ENCODE measurements at regions of chr5 and their contacts with region 1.

Region 1: DNA sequence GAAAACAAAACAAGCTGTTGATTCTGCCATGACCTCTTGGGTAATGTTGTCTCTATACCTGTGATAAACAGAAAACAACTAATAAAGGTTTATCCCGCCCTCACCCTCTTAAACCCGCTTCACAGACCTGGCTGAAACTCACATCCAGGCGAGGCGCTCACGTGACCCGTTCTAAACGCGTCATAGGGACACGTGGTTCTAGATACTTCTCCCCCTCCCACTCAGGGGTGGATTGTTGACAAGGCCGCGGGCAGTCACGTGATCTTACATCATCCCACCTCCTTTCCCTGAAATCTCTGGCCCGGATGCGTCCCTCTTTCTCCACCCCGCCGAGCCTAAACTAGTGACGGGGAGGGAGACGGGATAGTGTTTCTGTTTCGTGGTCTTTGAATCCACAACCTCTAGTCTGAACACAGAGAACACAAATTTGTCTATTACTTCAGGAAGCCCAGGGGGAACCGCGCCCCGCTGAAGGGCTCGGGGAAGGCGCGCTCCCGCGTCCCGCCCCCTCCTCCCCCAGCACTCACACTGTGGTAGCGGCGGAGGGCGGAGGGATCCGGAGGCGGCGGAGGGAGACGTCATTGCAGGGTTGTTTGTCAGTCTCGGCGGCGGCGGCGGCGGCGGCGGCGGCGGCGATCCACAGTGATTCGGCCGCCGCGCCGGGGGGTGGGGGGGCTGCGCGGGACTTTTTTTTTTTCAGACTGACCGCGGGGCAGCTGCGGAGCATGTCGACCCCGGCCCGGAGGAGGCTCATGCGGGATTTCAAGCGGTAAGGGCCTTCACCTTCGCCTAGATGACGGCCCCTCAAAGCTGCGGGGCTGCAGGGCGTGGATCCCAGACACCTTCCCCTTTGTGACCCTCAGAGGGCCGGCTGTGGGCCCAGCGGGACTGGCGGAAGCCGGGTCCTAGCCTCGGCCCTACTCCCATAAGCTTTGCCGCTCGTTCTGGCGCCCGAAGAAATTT is at the start of gene UBE2B:
- DNase-seq: peak; percentile 95
- ATAC-seq: peak; percentile 75
- H3K4me3 Mint-ChIP-seq: peak within 1 kb of the TSS; percentile 98
- H3K27ac Mint-ChIP-seq: peak within 1 kb of the TSS; percentile 100
- H3K4me1 Mint-ChIP-seq: peaks cover 54% of the 10 kb centered on the region
- H3K27me3 Mint-ChIP-seq: no peaks in the 10 kb centered on the region
- CTCF ChIP-seq: no peak
- total RNA-seq, gene UBE2B: 60.4 and 64.4 TPM in 2 replicates

Region 2: DNA sequence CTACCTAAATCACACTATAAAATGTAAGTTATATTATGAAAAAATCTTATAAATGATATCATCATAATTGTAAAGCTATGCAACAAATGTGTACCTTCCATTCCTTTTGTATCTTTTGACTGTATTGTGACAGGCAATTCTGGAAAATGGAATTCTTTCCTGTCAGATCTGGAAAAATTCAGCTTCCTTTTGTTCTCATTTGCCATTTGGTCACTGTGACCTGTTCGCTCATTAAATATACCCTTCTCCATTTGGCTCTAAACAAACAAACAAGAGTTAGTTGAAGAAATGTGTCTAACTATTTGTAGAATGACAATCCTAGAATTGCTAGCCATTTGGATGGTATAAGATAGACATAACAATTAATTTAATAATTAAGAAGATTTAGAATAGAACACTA is 66.8 kb before region 1 on chr5:
- CTCF ChIA-PET with region 1: interaction called, 5 read pairs
- POLR2A ChIA-PET with region 1: no interaction called
- intact Hi-C with region 1: loop called (anchors 5 kb)
- DNase-seq: no peak
- ATAC-seq: no peak
- H3K4me3 Mint-ChIP-seq: no peak overlapping the region
- H3K27ac Mint-ChIP-seq: no peak overlapping the region
- H3K4me1 Mint-ChIP-seq: no peaks in the 10 kb centered on the region
- H3K27me3 Mint-ChIP-seq: no peaks in the 10 kb centered on the region
- CTCF ChIP-seq: no peak

Region 3: GRCh38 chr5:134527146-134527960 is 156.2 kb after region 1 on chr5:
- CTCF ChIA-PET with region 1: no interaction called
- POLR2A ChIA-PET with region 1: interaction called, 86 read pairs
- intact Hi-C with region 1: loop called (anchors 1 kb)
- DNase-seq: peak; percentile 73
- ATAC-seq: peak; percentile 49
- H3K4me3 Mint-ChIP-seq: peak overlapping the region; percentile 98
- H3K27ac Mint-ChIP-seq: peak overlapping the region; percentile 85
- H3K4me1 Mint-ChIP-seq: peaks cover 58% of the 10 kb centered on the region
- H3K27me3 Mint-ChIP-seq: no peaks in the 10 kb centered on the region
- CTCF ChIP-seq: no peak

Region 4: DNA sequence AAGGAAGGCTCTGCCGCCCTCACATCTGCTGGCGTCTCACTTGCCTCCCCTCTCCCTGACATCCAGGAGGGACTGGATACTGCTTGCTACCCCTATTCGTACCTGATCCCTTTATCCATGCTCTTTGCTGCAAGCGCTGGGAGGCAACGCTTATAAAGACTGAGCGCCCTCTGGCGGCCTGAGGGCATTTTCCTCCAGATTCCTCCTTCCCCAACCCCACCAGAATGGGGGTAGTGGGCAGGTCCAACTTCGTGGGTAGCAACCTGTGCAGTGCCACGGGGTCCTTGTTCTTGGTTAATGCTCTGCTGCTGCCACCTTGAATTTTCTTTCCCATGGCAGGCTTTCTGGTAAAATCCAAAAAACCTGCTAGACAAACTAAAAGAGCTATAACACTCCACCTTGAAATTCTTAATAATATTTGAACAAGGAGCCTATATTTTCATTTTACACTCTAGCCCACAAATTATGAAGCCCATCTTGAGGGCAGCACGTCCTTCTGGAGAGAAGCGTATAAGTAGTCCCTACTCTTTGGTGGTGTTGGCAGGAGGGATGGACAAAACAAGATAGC is 206.7 kb after region 1 on chr5:
- CTCF ChIA-PET with region 1: interaction called, 3 read pairs
- POLR2A ChIA-PET with region 1: interaction called, 6 read pairs
- intact Hi-C with region 1: loop called (anchors 1 kb)
- DNase-seq: peak; percentile 72
- ATAC-seq: peak; percentile 72
- H3K4me3 Mint-ChIP-seq: no peak overlapping the region
- H3K27ac Mint-ChIP-seq: peak overlapping the region; percentile 27
- H3K4me1 Mint-ChIP-seq: peaks cover 17% of the 10 kb centered on the region
- H3K27me3 Mint-ChIP-seq: no peaks in the 10 kb centered on the region
- CTCF ChIP-seq: peak; percentile 55

Region 5: GRCh38 chr5:134648425-134649162 is 277.4 kb after region 1 on chr5 and contains the start of gene SEC24A:
- CTCF ChIA-PET with region 1: no interaction called
- POLR2A ChIA-PET with region 1: interaction called, 3 read pairs
- intact Hi-C with region 1: loop called (anchors 1 kb)
- DNase-seq: peak; percentile 86
- ATAC-seq: peak; percentile 77
- H3K4me3 Mint-ChIP-seq: peak within 1 kb of the TSS; percentile 91
- H3K27ac Mint-ChIP-seq: peak within 1 kb of the TSS; percentile 96
- H3K4me1 Mint-ChIP-seq: peaks cover 22% of the 10 kb centered on the region
- H3K27me3 Mint-ChIP-seq: no peaks in the 10 kb centered on the region
- CTCF ChIP-seq: no peak
- total RNA-seq, gene SEC24A: 13.8 and 15.6 TPM in 2 replicates

Region 6: DNA sequence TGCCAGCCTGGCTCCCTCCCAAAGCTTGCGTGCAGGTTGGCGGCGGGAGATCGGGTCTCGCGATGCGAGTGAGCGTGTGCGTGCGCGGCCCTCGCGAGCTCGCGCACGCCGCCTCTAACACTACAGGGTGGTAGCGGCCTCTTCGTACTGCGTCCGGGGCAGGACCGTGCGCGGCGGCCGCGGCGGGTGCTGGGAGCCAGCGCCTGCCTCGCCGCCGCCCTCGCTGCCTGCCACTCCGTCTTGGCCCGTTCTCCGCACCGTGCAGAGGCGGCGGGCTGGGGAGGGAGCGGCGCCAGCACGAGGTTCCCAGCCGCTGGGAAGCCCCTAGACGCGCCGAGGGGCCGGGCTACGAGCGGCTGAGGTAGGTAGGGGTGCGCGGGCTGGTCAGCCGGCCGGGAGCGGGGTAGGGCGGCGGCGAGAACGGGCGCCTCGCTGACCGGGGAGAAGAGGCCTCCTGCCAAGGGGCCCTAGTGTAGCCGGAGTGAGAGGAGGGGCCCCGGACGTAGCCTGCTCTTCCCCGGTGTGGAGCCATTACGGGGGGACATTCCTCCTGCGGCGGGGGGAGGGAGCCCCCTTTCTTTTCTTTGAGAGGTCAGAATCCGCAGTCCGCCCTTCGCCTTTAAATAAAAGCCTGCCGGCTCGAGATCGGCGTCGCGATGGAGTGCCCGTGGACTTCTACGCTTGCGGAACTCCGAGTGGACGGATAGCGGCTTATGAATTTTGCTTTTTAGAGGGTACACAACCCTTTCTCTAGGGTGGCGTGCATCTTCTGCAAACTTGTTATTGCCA is 474.9 kb after region 1 on chr5 and contains the start of gene C5orf24:
- CTCF ChIA-PET with region 1: no interaction called
- POLR2A ChIA-PET with region 1: interaction called, 8 read pairs
- intact Hi-C with region 1: loop called (anchors 2 kb)
- DNase-seq: peak; percentile 86
- ATAC-seq: peak; percentile 92
- H3K4me3 Mint-ChIP-seq: peak within 1 kb of the TSS; percentile 83
- H3K27ac Mint-ChIP-seq: peak within 1 kb of the TSS; percentile 95
- H3K4me1 Mint-ChIP-seq: peaks cover 26% of the 10 kb centered on the region
- H3K27me3 Mint-ChIP-seq: no peaks in the 10 kb centered on the region
- CTCF ChIP-seq: no peak
- total RNA-seq, gene C5orf24: 32.0 and 36.1 TPM in 2 replicates